Activated CD4-positive, alpha-beta T cell treated with anti-CD3 and anti-CD28 coated beads, Interleukin-2, amount 10 ng/mL, durations not matched to agents 7 days and 5 days (primary cell): ENCODE measurements at regions of chr19 and their contacts with region 1.

Region 1: GRCh38 chr19:18460900-18461299 is 23.0 kb upstream of the ISYNA1 start:
- DNase-seq: no peak
- H3K4me3 Mint-ChIP-seq: no peak overlapping the region
- H3K27ac Mint-ChIP-seq: no peak overlapping the region
- H3K4me1 Mint-ChIP-seq: peaks cover 21% of the 10 kb centered on the region
- H3K27me3 Mint-ChIP-seq: no peaks in the 10 kb centered on the region

Region 2: DNA sequence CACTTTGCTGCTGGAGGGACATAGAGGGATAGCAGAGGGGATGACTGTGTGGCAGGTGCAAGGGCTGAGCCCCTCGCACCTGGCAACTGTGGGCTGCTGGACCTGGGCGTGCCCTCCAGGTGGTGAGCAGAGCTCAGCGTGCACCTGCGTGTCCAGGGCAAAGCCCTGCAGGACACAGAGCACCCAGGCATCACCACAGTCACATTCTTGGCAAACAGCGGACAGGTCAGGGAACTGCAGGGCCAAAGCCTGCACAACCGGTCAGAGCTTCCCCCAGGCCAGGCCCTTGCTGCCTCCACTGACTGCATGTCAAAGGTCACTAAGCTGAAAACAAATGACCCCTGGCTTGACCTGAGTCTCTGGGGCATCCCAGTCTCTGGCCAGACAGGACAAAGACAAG is 14.0 kb before region 1 on chr19:
- CTCF ChIA-PET with region 1: interaction called, 15 read pairs
- POLR2A ChIA-PET with region 1: no interaction called
- DNase-seq: no peak
- H3K4me3 Mint-ChIP-seq: no peak overlapping the region
- H3K27ac Mint-ChIP-seq: no peak overlapping the region
- H3K4me1 Mint-ChIP-seq: peaks cover 12% of the 10 kb centered on the region
- H3K27me3 Mint-ChIP-seq: no peaks in the 10 kb centered on the region